ENCODE measurements at regions of chr1 and their contacts with region 1.

Region 1: DNA sequence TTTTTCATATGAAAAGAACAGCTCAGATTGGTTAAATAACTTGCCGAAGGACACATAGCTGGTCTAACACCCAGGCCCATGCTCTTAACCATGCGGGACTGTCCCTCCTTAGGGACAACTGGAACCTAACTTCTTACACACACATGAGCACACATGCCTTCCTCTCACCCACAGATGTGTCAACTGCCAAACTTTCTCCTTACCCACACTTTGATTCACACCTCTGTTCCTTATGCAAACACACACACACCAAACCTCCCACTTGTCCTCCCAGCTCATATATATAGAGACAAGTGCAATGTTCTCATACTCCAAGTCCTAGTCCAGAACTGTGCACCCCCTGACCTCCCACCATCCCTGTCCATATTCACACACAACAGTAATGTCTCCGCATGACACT is 4.3 kb downstream of the RAB25 start:
- DNase-seq: no peak
- H3K4me3 Mint-ChIP-seq: no peak overlapping the region
- H3K27ac Mint-ChIP-seq: no peak overlapping the region
- H3K4me1 Mint-ChIP-seq: peaks cover 20% of the 10 kb centered on the region
- H3K27me3 Mint-ChIP-seq: no peaks in the 10 kb centered on the region

Region 2: DNA sequence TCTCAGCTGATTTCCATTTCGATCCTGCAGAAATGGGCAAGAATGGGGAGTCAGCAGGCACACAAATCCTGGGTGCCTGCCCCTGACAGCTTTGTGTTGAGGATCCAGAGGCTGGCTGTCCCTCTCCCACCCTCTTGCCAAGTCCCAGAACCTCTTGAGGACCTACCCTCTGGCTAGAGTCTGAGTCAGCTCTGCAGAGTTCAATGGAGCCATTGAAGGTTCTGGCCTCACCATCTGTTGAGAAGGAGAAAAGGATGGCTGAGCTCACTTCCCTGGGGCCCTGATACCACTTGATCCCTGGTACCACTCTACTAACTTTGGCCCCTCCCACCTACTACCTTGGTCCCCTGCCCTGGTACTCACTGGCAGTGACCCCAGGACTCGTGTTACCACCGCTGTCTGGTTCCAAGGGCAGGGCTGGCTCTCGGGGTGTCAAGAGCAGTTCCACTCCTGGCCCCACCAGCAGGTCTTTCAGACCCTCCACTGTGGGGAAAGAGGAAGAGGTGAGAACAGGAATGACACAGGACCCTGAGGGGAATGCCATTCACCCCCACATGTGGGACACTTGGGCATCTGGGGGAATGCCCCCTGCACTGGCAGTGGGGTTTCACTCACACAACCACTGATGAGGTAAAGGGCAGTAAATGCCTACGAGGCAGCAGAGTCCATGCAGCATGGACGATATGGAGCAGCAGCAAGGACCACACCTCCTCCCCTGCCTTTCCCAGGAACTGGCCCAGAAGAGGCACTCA is 113.3 kb before region 1 on chr1:
- CTCF ChIA-PET with region 1: no interaction called
- POLR2A ChIA-PET with region 1: no interaction called
- intact Hi-C with region 1: no loop called
- DNase-seq: no peak
- H3K4me3 Mint-ChIP-seq: no peak overlapping the region
- H3K27ac Mint-ChIP-seq: peak overlapping the region; percentile 45
- H3K4me1 Mint-ChIP-seq: peaks cover 12% of the 10 kb centered on the region
- H3K27me3 Mint-ChIP-seq: no peaks in the 10 kb centered on the region

Region 3: DNA sequence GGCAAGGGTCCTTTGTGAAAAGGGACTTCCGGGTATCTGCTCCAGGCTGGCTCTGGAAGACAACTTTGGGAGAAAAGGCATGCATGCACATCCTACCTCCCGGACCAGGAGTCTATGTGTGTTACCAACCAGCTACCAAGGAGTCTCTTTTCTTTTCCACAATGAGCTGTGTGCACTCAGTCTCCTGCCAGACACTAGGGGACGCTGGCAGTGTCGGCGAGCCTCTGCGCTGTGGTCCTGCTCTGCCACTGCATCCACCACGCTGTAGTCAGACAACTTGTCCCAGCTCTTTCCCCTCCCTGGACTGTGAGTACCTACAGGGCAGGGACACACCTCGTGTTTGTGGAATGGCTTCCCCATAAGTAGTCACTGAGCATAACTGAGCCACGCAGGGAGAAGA is 39.3 kb before region 1 on chr1:
- CTCF ChIA-PET with region 1: interaction called, 21 read pairs
- POLR2A ChIA-PET with region 1: no interaction called
- intact Hi-C with region 1: loop called (anchors 2 kb)
- DNase-seq: peak; percentile 59
- H3K4me3 Mint-ChIP-seq: no peak overlapping the region
- H3K27ac Mint-ChIP-seq: no peak overlapping the region
- H3K4me1 Mint-ChIP-seq: peaks cover 6% of the 10 kb centered on the region
- H3K27me3 Mint-ChIP-seq: no peaks in the 10 kb centered on the region

Region 4: DNA sequence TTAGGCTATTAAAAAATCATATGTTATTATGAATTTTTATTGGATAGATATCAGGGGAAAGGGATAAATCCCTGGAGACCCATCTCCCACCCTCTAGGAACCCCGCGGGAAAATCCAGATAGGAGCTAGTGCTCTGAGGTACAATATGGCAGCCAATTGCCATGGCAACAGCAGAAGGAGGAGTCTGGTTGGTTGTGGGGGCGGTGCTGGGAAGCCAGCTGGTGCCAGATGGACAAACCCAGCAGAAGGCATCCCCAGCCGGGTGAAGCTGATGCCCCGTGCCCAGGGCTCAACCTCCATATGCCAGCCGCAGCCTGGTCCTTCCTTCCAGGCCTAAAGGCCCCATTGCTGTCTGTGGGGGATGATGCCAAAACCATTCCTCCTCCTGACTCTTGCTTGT is 342.1 kb after region 1 on chr1:
- CTCF ChIA-PET with region 1: no interaction called
- POLR2A ChIA-PET with region 1: no interaction called
- intact Hi-C with region 1: no loop called
- DNase-seq: no peak
- H3K4me3 Mint-ChIP-seq: no peak overlapping the region
- H3K27ac Mint-ChIP-seq: no peak overlapping the region
- H3K4me1 Mint-ChIP-seq: no peaks in the 10 kb centered on the region
- H3K27me3 Mint-ChIP-seq: peaks cover 16% of the 10 kb centered on the region